ENCODE measurements at regions of chr7 and their contacts with region 1.

Region 1: DNA sequence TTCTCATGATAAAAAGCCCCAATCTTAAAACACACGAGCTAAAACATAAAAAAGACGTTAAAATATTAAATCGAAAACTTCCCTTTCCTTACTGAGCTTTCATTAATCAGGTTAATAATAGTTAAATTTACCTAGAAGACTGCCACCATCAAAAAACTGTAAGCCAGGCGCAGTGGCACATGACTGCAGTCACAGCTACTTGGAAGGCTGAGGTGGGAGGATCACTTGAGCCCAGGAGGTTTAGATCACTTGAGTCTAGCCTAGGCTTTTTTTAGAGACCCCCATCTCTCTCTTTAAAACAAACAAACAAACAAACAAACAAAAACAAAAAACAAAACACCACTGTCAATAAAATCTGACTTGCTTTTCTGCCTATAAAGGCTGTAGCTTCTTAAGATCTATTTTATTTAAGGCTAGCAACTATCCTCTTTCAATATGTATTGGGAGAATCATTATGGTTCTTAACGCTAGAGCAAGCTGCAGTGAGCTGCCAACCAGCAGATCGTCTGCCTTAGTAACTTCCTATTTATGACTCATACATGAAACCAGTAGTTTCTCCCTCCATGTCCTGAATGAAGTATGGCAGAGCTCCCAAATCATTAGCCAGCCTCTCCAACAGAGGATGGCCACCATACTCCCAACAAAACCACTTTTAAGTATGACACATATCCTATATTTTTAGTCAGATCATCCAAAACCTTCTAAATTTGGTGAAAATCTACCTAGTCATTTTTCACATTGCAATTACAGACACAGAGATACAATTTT is 163.7 kb downstream of the SRPK2 start:
- DNase-seq: no peak
- ATAC-seq: peak; percentile 95
- H3K4me3 Mint-ChIP-seq: peak overlapping the region; percentile 42
- H3K27ac Mint-ChIP-seq: peak overlapping the region; percentile 73
- H3K4me1 Mint-ChIP-seq: peaks cover 20% of the 10 kb centered on the region
- H3K27me3 Mint-ChIP-seq: no peaks in the 10 kb centered on the region
- CTCF ChIP-seq: no peak

Region 2: DNA sequence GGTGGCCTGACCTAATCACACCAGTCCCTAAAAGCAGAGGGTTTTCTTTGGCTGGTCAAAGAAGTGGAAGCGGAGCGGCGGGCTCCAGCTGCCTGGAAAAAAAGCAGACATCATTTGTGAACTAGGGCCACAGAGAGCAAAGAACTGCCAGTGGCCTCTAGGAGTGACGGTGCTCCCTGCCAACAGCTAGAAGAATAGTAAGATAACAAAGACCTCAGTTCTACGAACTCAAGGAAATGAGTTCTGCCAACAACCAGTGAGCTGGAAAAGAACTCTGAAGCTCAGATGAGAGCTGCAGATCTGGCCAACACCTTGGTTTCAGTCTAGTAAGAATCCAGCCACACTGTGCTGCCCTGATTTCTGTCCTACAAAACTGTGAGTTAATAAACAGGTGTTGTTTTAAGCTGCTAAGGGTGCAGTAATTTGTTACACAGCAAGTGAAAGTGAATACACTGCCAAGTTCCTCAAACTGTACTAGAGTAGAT is 14.3 kb before region 1 on chr7:
- CTCF ChIA-PET with region 1: no interaction called
- POLR2A ChIA-PET with region 1: no interaction called
- intact Hi-C with region 1: loop called (anchors 1 kb)
- DNase-seq: no peak
- ATAC-seq: peak; percentile 77
- H3K4me3 Mint-ChIP-seq: peak overlapping the region; percentile 50
- H3K27ac Mint-ChIP-seq: peak overlapping the region; percentile 90
- H3K4me1 Mint-ChIP-seq: peaks cover 86% of the 10 kb centered on the region
- H3K27me3 Mint-ChIP-seq: no peaks in the 10 kb centered on the region
- CTCF ChIP-seq: no peak

Region 3: GRCh38 chr7:105268511-105269392 is 43.7 kb after region 1 on chr7:
- CTCF ChIA-PET with region 1: no interaction called
- POLR2A ChIA-PET with region 1: no interaction called
- intact Hi-C with region 1: loop called (anchors 5 kb)
- DNase-seq: no peak
- ATAC-seq: peak; percentile 74
- H3K4me3 Mint-ChIP-seq: peak overlapping the region; percentile 83
- H3K27ac Mint-ChIP-seq: peak overlapping the region; percentile 93
- H3K4me1 Mint-ChIP-seq: peaks cover 60% of the 10 kb centered on the region
- H3K27me3 Mint-ChIP-seq: no peaks in the 10 kb centered on the region
- CTCF ChIP-seq: no peak